CD4-positive, alpha-beta T cell (primary cell): ENCODE measurements at regions of chr3 and their contacts with region 1.

Region 1: DNA sequence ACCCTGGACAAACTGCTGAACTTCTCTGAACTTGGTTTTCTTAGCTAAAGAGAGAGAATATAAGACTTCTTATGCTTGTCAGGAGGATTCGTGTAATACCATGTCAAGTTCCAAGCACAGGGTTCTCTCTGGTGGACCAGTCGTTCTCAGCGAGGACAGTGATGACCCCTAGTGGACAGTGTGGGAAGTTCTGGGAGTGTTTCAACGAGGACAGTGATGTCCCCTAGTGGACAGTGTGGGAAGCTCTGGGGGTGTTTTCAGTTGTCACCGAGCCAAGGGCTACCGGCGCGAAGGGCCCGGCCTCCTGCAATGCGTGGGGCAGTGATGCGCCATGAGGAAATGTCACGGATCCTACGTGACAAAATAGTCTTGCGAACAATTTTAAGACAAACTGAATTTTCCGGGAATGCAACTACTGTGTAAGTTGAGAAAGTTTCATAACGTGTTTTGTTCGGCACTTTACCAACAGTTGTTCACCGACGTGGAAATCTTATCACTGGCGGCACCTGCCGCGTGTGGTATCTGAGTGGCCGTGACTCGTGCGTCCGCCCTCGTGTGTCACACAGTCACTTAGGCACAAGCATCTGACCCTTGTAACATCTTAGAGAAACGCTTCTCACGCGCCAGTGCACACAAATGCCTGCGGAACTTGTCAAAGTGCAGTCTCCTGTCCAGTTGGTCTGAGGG is 39.3 kb upstream of the MUC4 start:
- DNase-seq: peak; percentile 75 to 94 (median 86)
- ATAC-seq: peak; percentile 100
- H3K4me3 ChIP-seq: no peak overlapping the region
- H3K4me3 Mint-ChIP-seq: peak overlapping the region; percentile 7
- H3K27ac ChIP-seq: no peak overlapping the region
- H3K27ac Mint-ChIP-seq: no peak overlapping the region
- H3K4me1 ChIP-seq: peaks cover 5% of the 10 kb centered on the region
- H3K4me1 Mint-ChIP-seq: peaks cover 6% of the 10 kb centered on the region
- H3K27me3 ChIP-seq: no peaks in the 10 kb centered on the region
- H3K27me3 Mint-ChIP-seq: peaks cover 5% of the 10 kb centered on the region
- CTCF ChIP-seq: peak; percentile 100

Region 2: DNA sequence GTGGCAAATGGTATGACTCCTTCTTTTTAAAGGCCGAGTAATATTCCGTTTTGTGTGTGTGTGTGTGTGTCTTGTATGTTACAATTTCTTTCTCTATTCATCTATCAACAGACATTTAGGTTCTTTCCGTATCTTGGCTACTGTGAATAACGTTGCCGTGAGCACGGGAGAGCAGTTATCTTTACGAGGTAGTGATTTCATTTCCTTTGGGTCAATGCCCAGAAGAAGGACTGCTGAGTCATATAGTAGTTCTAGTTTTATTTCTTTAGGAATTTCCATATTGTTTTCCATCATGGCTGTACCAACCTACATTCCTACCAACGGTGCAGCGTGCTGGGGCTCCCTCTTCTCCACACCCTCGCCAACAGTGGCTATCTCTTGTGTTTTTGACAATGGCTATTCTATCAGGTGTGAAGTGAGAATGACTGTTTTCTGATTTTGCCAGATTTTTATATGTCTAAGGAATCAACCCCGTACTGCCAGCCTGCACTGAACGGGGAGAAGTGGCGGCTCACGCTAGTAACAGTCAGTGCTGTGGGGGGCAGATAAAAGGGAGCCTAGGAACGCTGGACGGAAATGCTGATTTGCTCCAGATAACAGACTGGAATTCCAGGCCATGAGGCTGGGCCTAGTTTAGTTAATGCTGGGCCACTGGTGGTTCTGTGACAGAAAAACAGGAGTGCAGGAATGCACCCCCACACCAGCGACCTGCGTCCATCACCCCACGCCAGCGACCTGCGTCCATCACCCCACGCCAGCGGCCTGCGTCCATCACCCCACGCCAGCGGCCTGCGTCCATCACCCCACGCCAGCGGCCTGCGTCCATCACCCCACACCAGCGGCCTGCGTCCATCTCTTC is 748.2 kb before region 1 on chr3:
- CTCF ChIA-PET with region 1: no interaction called
- POLR2A ChIA-PET with region 1: no interaction called
- intact Hi-C with region 1: no loop called
- DNase-seq: peak in 2 of 14 experiments; percentile 43 to 54
- ATAC-seq: no peak
- H3K4me3 ChIP-seq: no peak overlapping the region
- H3K4me3 Mint-ChIP-seq: no peak overlapping the region
- H3K27ac ChIP-seq: no peak overlapping the region
- H3K27ac Mint-ChIP-seq: no peak overlapping the region
- H3K4me1 ChIP-seq: peaks cover 8% of the 10 kb centered on the region
- H3K4me1 Mint-ChIP-seq: peaks cover 7% of the 10 kb centered on the region
- H3K27me3 ChIP-seq: no peaks in the 10 kb centered on the region
- H3K27me3 Mint-ChIP-seq: no peaks in the 10 kb centered on the region
- CTCF ChIP-seq: no peak

Region 3: DNA sequence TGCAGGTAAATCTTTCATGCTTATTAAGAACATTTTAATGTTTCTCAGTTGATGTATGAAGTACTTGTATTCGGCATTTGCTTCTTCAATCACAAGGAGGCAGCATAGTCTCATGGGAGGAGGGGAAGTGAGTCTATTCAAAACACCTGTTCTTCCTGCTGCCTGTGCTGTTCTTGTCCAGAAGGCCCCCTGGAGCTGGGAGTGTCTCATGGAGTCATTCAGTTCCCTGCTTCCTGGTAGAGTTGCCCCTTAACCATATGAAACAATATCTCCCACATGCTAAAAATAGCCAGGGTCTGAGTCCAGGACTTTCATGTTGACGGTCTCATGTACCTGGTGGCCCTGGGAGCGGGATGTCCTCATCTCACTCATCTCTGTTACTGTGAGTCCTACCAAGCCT is 292.4 kb before region 1 on chr3:
- CTCF ChIA-PET with region 1: interaction called, 7 read pairs
- POLR2A ChIA-PET with region 1: no interaction called
- intact Hi-C with region 1: loop called in 1 of 2 experiments (anchors 2 kb)
- DNase-seq: peak in 6 of 14 experiments; percentile 32 to 80 (median 64)
- ATAC-seq: peak; percentile 78
- H3K4me3 ChIP-seq: no peak overlapping the region
- H3K4me3 Mint-ChIP-seq: peak overlapping the region; percentile 50
- H3K27ac ChIP-seq: no peak overlapping the region
- H3K27ac Mint-ChIP-seq: peak overlapping the region; percentile 72
- H3K4me1 ChIP-seq: peaks cover 28% of the 10 kb centered on the region
- H3K4me1 Mint-ChIP-seq: peaks cover 42% of the 10 kb centered on the region
- H3K27me3 ChIP-seq: no peaks in the 10 kb centered on the region
- H3K27me3 Mint-ChIP-seq: no peaks in the 10 kb centered on the region
- CTCF ChIP-seq: peak; percentile 77

Region 4: GRCh38 chr3:195732940-195733339 is 118.1 kb before region 1 on chr3:
- CTCF ChIA-PET with region 1: no interaction called
- POLR2A ChIA-PET with region 1: no interaction called
- intact Hi-C with region 1: no loop called
- DNase-seq: peak in 1 of 14 experiments; percentile 27
- ATAC-seq: no peak
- H3K4me3 ChIP-seq: no peak overlapping the region
- H3K4me3 Mint-ChIP-seq: no peak overlapping the region
- H3K27ac ChIP-seq: no peak overlapping the region
- H3K27ac Mint-ChIP-seq: no peak overlapping the region
- H3K4me1 ChIP-seq: no peaks in the 10 kb centered on the region
- H3K4me1 Mint-ChIP-seq: no peaks in the 10 kb centered on the region
- H3K27me3 ChIP-seq: no peaks in the 10 kb centered on the region
- H3K27me3 Mint-ChIP-seq: no peaks in the 10 kb centered on the region
- CTCF ChIP-seq: no peak

Region 5: GRCh38 chr3:195839282-195840010 is 11.6 kb before region 1 on chr3:
- CTCF ChIA-PET with region 1: interaction called, 20 read pairs
- POLR2A ChIA-PET with region 1: no interaction called
- intact Hi-C with region 1: no loop called
- DNase-seq: no peak
- ATAC-seq: no peak
- H3K4me3 ChIP-seq: no peak overlapping the region
- H3K4me3 Mint-ChIP-seq: no peak overlapping the region
- H3K27ac ChIP-seq: no peak overlapping the region
- H3K27ac Mint-ChIP-seq: no peak overlapping the region
- H3K4me1 ChIP-seq: no peaks in the 10 kb centered on the region
- H3K4me1 Mint-ChIP-seq: no peaks in the 10 kb centered on the region
- H3K27me3 ChIP-seq: no peaks in the 10 kb centered on the region
- H3K27me3 Mint-ChIP-seq: no peaks in the 10 kb centered on the region
- CTCF ChIP-seq: no peak

Region 6: GRCh38 chr3:195863121-195864006 is 12.4 kb after region 1 on chr3:
- CTCF ChIA-PET with region 1: interaction called, 23 read pairs
- POLR2A ChIA-PET with region 1: interaction called, 4 read pairs
- intact Hi-C with region 1: no loop called
- DNase-seq: peak; percentile 42 to 76 (median 57)
- ATAC-seq: peak; percentile 78
- H3K4me3 ChIP-seq: no peak overlapping the region
- H3K4me3 Mint-ChIP-seq: no peak overlapping the region
- H3K27ac ChIP-seq: no peak overlapping the region
- H3K27ac Mint-ChIP-seq: no peak overlapping the region
- H3K4me1 ChIP-seq: peaks cover 11% of the 10 kb centered on the region
- H3K4me1 Mint-ChIP-seq: peaks cover 5% of the 10 kb centered on the region
- H3K27me3 ChIP-seq: no peaks in the 10 kb centered on the region
- H3K27me3 Mint-ChIP-seq: no peaks in the 10 kb centered on the region
- CTCF ChIP-seq: peak; percentile 73

Region 7: GRCh38 chr3:196198771-196199753 is 348.1 kb after region 1 on chr3:
- CTCF ChIA-PET with region 1: no interaction called
- POLR2A ChIA-PET with region 1: no interaction called
- intact Hi-C with region 1: loop called in 1 of 2 experiments (anchors 5 kb)
- DNase-seq: no peak
- ATAC-seq: no peak
- H3K4me3 ChIP-seq: no peak overlapping the region
- H3K4me3 Mint-ChIP-seq: no peak overlapping the region
- H3K27ac ChIP-seq: no peak overlapping the region
- H3K27ac Mint-ChIP-seq: no peak overlapping the region
- H3K4me1 ChIP-seq: peaks cover 21% of the 10 kb centered on the region
- H3K4me1 Mint-ChIP-seq: no peaks in the 10 kb centered on the region
- H3K27me3 ChIP-seq: no peaks in the 10 kb centered on the region
- H3K27me3 Mint-ChIP-seq: no peaks in the 10 kb centered on the region
- CTCF ChIP-seq: no peak